ENCODE measurements at regions of chr1 and their contacts with region 1.

Region 1: DNA sequence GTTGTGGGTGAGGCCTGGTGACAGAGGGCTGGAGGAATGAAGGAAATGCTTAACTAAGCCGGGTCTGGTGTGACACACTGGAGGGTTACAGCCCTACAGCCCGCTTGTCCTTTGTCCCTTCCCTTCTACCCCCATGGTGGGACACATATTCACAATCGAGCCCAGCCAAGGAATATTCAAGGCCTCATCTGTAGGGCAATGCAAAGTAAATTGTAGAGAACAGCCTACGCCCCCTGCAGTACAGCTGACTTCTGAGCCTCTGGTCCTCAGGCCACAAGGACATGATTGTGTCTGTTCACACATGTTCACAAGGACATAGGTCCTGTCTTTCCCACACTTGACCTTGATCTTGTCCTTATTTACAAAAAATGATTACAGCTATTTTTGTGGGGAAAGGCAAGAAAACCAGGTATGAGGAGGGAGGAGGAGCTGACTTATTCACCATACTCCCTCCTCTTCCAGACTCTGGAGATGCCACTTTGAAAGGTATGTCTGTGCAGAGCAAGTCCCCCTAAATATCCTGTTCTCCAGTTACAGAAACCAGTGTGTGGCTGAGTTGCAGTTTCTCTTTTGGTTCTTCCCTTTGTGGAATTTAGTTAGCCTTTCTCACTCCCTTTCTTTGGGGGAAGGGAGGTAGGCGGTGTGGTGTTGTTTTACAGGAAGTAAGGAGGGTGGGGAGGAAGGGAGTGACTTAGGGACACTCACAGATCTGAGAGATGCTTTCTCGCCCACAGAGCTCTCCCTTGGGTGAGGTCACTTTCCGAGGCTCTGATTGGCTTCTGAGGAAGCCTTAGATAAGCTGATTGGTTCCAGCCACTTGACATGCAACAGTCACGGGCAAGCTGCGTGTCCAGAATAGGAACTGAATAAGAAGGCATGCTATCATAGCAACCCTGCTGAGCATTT is 14.6 kb downstream of the POLR3GL start:
- DNase-seq: peak; percentile 97 to 99 (median 99)
- ATAC-seq: peak; percentile 94
- H3K4me3 ChIP-seq: no peak overlapping the region
- H3K27ac ChIP-seq: peak overlapping the region; percentile 96
- H3K4me1 ChIP-seq: peaks cover 24 to 63% of the 10 kb centered on the region in 2 experiments
- H3K27me3 ChIP-seq: no peaks in the 10 kb centered on the region
- CTCF ChIP-seq: peak; percentile 53 to 69 (median 54)
- EP300 ChIP-seq: peak; percentile 85
- POLR2A ChIP-seq: peak; percentile 76; the same call in 1 of the 2 replicates
- RAD21 ChIP-seq: peak; percentile 28 to 44; a peak in 2 of 4 replicates

Region 2: DNA sequence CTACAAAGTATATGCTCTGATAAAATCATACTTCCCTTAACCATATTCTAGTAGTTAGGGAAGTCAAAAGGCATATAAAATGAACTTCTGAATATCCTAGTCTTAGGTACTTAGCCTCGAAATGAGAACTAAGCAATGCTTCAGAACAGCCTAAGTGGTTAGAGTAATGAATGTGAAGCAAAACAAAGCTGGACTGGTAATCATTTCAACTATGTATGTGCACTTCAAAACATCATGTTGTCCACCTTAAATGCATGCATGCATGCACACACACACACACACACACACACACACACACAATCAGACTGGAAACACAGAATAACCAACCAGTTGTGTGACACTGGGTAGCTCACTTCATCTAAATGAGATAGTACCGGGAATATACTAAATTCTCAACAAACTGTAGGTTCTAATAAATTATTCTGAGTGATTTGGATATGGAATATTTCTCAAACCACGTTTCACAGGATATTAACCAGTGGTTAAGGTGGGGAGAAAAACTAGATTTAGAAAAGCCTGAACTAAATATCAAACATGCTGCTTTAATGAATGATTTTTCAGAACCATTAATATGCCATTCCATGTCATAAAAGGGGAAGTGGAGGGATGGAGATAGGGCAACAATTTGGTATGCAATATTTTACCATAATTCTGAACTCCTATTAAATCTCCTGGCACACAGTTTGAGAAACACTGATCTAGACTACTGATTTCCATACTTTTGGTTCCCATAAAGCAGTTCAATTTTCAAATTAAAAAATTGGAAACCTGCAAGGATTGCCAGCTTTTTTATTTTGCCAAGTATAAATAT is 174.7 kb before region 1 on chr1:
- CTCF ChIA-PET with region 1: no interaction called
- POLR2A ChIA-PET with region 1: no interaction called
- in situ Hi-C with region 1: no loop called
- intact Hi-C with region 1: no loop called
- DNase-seq: no peak
- ATAC-seq: no peak; the same call in 2 of the 3 replicates
- H3K4me3 ChIP-seq: no peak overlapping the region
- H3K27ac ChIP-seq: no peak overlapping the region
- H3K4me1 ChIP-seq: no peaks in the 10 kb centered on the region; a peak in 1 of 5 replicates
- H3K27me3 ChIP-seq: no peaks in the 10 kb centered on the region
- CTCF ChIP-seq: no peak
- EP300 ChIP-seq: no peak
- POLR2A ChIP-seq: no peak
- RAD21 ChIP-seq: no peak

Region 3: GRCh38 chr1:145845514-145846161 is 133.5 kb before region 1 on chr1 and contains the start of gene NUDT17:
- CTCF ChIA-PET with region 1: interaction called, 5 read pairs
- POLR2A ChIA-PET with region 1: interaction called, 3 read pairs
- in situ Hi-C with region 1: no loop called
- intact Hi-C with region 1: loop called (anchors 1 kb)
- DNase-seq: peak; percentile 82 to 89 (median 86)
- ATAC-seq: peak; percentile 89
- H3K4me3 ChIP-seq: peak within 1 kb of the TSS; percentile 54
- H3K27ac ChIP-seq: peak within 1 kb of the TSS; percentile 59
- H3K4me1 ChIP-seq: peaks cover 7 to 20% of the 10 kb centered on the region in 2 experiments; a peak in 4 of 5 replicates
- H3K27me3 ChIP-seq: no peaks in the 10 kb centered on the region
- CTCF ChIP-seq: peak; percentile 85 to 96 (median 92)
- EP300 ChIP-seq: no peak
- POLR2A ChIP-seq: peak; percentile 75
- RAD21 ChIP-seq: peak; percentile 71 to 77
- polyA plus RNA-seq, gene NUDT17: 2.1 to 3.1 TPM

Region 4: GRCh38 chr1:145963995-145964901 is 14.9 kb before region 1 on chr1 and contains the starts of genes ANKRD34A and POLR3GL:
- CTCF ChIA-PET with region 1: interaction called, 3 read pairs
- POLR2A ChIA-PET with region 1: interaction called, 15 read pairs
- in situ Hi-C with region 1: no loop called
- intact Hi-C with region 1: loop called (anchors 1 kb)
- DNase-seq: peak; percentile 92 to 98 (median 94)
- ATAC-seq: peak; percentile 98
- H3K4me3 ChIP-seq: peak within 1 kb of the TSS; percentile 63
- H3K27ac ChIP-seq: peak within 1 kb of the TSS; percentile 87
- H3K4me1 ChIP-seq: peaks cover 23 to 36% of the 10 kb centered on the region in 2 experiments; a peak in 4 of 5 replicates
- H3K27me3 ChIP-seq: no peaks in the 10 kb centered on the region; a peak in 1 of 5 replicates
- CTCF ChIP-seq: no peak
- EP300 ChIP-seq: no peak
- POLR2A ChIP-seq: peak; percentile 94
- RAD21 ChIP-seq: no peak
- polyA plus RNA-seq, gene ANKRD34A: 0.06 to 0.07 TPM
- polyA plus RNA-seq, gene POLR3GL: 14.6 to 21.7 TPM

Region 5: GRCh38 chr1:145996433-145997015 is 17.4 kb after region 1 on chr1 and contains the start of gene TXNIP:
- CTCF ChIA-PET with region 1: no interaction called
- POLR2A ChIA-PET with region 1: interaction called, 320 read pairs
- in situ Hi-C with region 1: no loop called
- intact Hi-C with region 1: loop called (anchors 1 kb)
- DNase-seq: peak; percentile 99 to 100 (median 100)
- ATAC-seq: peak; percentile 71
- H3K4me3 ChIP-seq: peak within 1 kb of the TSS; percentile 85
- H3K27ac ChIP-seq: peak within 1 kb of the TSS; percentile 99
- H3K4me1 ChIP-seq: peaks cover 14 to 31% of the 10 kb centered on the region in 2 experiments; a peak in 3 of 5 replicates
- H3K27me3 ChIP-seq: no peaks in the 10 kb centered on the region
- CTCF ChIP-seq: peak in 1 of 3 experiments; percentile 4; a peak in 1 of 6 replicates
- EP300 ChIP-seq: peak; percentile 91
- POLR2A ChIP-seq: peak; percentile 100
- RAD21 ChIP-seq: no peak
- polyA plus RNA-seq, gene TXNIP: 120 to 237 TPM

Region 6: GRCh38 chr1:146012737-146013403 is 33.8 kb after region 1 on chr1:
- CTCF ChIA-PET with region 1: interaction called, 37 read pairs
- POLR2A ChIA-PET with region 1: interaction called, 7 read pairs
- in situ Hi-C with region 1: no loop called
- intact Hi-C with region 1: loop called (anchors 1 kb)
- DNase-seq: peak; percentile 51 to 83 (median 56)
- ATAC-seq: peak; percentile 84
- H3K4me3 ChIP-seq: no peak overlapping the region
- H3K27ac ChIP-seq: no peak overlapping the region
- H3K4me1 ChIP-seq: peaks cover 2 to 6% of the 10 kb centered on the region in 2 experiments
- H3K27me3 ChIP-seq: no peaks in the 10 kb centered on the region
- CTCF ChIP-seq: peak; percentile 78 to 97 (median 82)
- EP300 ChIP-seq: peak; percentile 26; the same call in 1 of the 2 replicates
- POLR2A ChIP-seq: no peak
- RAD21 ChIP-seq: peak; percentile 98

Measured in K562 (cell line).